Psoas muscle (tissue), 8 donors: ENCODE measurements at regions of chr1 and their contacts with region 1.

Region 1: DNA sequence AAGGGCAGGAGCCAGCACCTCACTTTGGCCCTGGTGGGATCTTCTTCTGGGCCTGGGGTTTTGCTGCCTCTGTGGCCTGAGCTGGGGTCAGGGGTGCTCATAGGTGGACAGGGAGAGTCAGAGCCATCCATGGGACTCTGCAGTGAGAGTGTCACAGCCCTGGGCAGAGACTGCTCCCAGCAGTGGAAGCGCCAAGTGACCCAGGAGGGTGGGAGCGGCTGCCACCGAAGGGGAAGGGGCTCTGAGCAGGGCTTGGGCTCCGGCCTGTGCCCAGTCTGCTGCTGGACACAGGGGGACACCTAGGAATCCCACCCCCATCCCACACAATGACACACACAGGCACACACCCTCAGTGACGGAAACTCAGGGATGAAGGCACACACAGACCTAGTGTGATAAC is 368 bp downstream of the CLCNKB start:
- DNase-seq: no peak
- ATAC-seq: no peak
- H3K4me3 ChIP-seq: no peak overlapping the region
- H3K27ac ChIP-seq: no peak overlapping the region
- H3K4me1 ChIP-seq: peaks cover 5% of the 10 kb centered on the region
- H3K27me3 ChIP-seq: no peaks in the 10 kb centered on the region
- CTCF ChIP-seq: no peak

Region 2: DNA sequence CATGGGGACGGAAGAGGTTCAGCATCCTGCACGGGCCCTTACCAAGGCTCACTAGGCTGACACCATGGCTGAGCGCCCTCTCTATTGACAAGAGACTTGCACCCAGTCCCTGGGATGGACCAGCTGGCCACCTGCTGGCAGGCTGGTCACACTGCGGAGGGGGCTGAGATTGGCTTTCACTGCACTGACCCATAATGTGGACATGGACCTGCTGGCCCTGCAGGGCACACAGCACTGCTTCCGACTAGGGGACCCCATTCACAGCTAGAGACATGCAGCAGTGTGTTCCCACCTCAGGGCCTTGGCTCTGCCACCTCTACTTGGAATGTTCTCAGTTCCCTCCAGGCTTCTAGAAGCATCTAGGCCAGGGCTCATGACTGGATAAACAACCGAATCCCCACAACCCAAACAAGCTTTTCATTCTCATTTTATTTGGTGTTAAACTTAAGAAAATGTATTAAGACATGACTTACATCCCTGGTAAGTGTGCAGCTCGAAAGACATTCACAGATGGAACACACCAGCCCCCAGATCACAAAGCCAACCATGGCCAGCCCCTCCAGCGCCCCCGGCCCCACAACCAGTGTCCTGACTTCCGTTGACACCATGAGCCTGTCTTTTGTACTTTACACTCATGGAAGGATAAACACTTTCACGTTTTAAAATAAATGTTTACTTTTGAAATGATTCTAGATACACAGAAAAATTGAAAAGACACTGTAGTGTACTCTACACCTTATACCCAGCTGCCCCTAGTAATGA is 49.2 kb before region 1 on chr1:
- intact Hi-C with region 1: no loop called
- DNase-seq: peak; percentile 68 to 78
- ATAC-seq: peak; percentile 73 to 89 (median 82)
- H3K4me3 ChIP-seq: no peak overlapping the region
- H3K27ac ChIP-seq: no peak overlapping the region
- H3K4me1 ChIP-seq: no peaks in the 10 kb centered on the region
- H3K27me3 ChIP-seq: no peaks in the 10 kb centered on the region
- CTCF ChIP-seq: peak; percentile 66

Region 3: GRCh38 chr1:16021681-16022080 is 22.3 kb before region 1 on chr1 and contains the start of gene CLCNKA:
- intact Hi-C with region 1: loop called in 1 of 2 experiments (anchors 1 kb)
- DNase-seq: no peak
- ATAC-seq: no peak
- H3K4me3 ChIP-seq: no peak within 1 kb of the TSS
- H3K27ac ChIP-seq: peak within 1 kb of the TSS; percentile 100
- H3K4me1 ChIP-seq: peaks cover 25% of the 10 kb centered on the region
- H3K27me3 ChIP-seq: no peaks in the 10 kb centered on the region
- CTCF ChIP-seq: no peak
- total RNA-seq, gene CLCNKA: 0.84 to 2.2 (median 1.4) TPM

Region 4: DNA sequence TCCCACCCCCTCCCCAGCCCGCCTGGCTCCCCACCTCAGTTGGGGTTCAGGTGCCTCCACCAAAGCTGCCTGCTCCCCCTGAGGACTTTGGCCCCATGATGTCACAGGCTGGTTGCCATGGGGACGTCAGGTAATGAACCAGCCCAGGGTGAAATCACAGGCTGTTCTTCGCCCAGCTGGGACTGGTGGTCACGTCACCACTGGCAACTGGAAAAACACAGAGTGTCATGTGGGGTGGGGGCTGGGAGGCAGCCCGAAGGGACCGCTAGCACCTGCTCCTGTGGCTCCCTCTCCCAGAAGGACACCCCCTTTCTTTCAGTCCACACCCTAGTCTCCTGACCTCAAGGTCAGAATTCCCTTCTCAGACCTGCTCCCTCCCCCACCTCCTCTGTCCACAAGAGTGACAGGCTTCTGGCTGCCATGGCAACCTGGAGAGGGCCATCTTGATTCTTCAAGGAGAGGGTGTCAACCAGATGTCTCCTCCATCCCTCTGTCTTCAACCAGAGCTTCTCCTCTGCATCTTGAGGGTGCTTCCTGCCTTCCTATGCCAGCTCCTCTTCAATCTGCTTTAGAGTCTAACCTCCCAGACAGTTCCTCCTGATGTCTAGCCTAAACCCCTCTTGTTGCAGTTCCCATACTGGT is 23.3 kb after region 1 on chr1:
- intact Hi-C with region 1: loop called in 1 of 2 experiments (anchors 1 kb)
- DNase-seq: no peak
- ATAC-seq: peak in 2 of 4 donors; percentile 20 to 61
- H3K4me3 ChIP-seq: no peak overlapping the region
- H3K27ac ChIP-seq: no peak overlapping the region
- H3K4me1 ChIP-seq: no peaks in the 10 kb centered on the region
- H3K27me3 ChIP-seq: peaks cover 0 to 7% (median 2%) of the 10 kb centered on the region in 3 donors
- CTCF ChIP-seq: no peak

Region 5: GRCh38 chr1:16717336-16718098 is 673.6 kb after region 1 on chr1:
- intact Hi-C with region 1: no loop called
- DNase-seq: peak; percentile 16 to 56
- ATAC-seq: peak in 2 of 4 donors; percentile 16 to 28
- H3K4me3 ChIP-seq: no peak overlapping the region
- H3K27ac ChIP-seq: no peak overlapping the region
- H3K4me1 ChIP-seq: no peaks in the 10 kb centered on the region
- H3K27me3 ChIP-seq: peaks cover 0 to 25% (median 4%) of the 10 kb centered on the region in 3 donors
- CTCF ChIP-seq: no peak